Ascending aorta (tissue), 2 donors: ENCODE measurements at regions of chr2 and their contacts with region 1.

Region 1: GRCh38 chr2:47008381-47009252 is 93.0 kb upstream of the MCFD2 start:
- DNase-seq: peak in 1 of 2 donors; percentile 83
- H3K4me3 ChIP-seq: peak overlapping the region in 1 of 2 donors; percentile 11
- H3K27ac ChIP-seq: peak overlapping the region; percentile 71 to 77
- H3K4me1 ChIP-seq: peaks cover 20 to 49% of the 10 kb centered on the region in 2 donors
- H3K27me3 ChIP-seq: no peaks in the 10 kb centered on the region
- CTCF ChIP-seq: no peak

Region 2: DNA sequence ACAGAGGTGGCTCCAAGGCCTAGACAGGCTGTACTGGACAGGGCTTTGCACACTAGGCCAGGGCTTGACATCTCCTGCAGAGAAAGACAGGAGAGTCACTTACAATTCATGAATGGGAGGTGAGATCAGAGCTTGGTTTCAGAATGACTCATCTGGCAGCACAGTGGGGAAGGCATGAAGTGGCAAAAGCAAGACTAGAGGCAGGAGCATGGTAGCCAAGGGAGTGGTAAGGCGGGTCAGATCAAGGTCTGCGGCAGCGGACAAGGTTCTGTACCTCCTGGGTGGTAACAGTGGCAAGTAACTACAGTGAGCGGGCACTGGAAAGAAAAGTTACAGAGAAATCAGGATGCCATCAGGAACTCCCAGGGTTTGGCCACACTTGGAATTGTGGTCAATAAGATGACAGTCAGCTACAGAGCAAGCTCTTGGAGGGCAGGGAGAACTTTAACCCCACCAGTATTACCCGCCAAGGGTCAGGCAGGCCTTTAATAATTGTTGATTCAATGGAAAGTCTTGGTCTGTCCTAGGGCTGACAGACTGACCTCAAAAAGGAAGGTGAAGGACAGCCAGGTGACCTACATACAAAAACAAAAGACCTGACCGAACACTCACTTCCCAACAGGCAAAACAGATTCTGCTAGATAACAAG is 98.7 kb before region 1 on chr2:
- intact Hi-C with region 1: no loop called
- DNase-seq: no peak
- H3K4me3 ChIP-seq: no peak overlapping the region
- H3K27ac ChIP-seq: no peak overlapping the region
- H3K4me1 ChIP-seq: peaks cover 4 to 15% of the 10 kb centered on the region in 2 donors
- H3K27me3 ChIP-seq: no peaks in the 10 kb centered on the region
- CTCF ChIP-seq: no peak

Region 3: GRCh38 chr2:46984642-46985476 is 23.8 kb before region 1 on chr2:
- intact Hi-C with region 1: loop called (anchors 2 kb)
- DNase-seq: peak; percentile 82 to 94
- H3K4me3 ChIP-seq: no peak overlapping the region
- H3K27ac ChIP-seq: peak overlapping the region; percentile 90 to 93
- H3K4me1 ChIP-seq: peaks cover 28 to 63% of the 10 kb centered on the region in 2 donors
- H3K27me3 ChIP-seq: no peaks in the 10 kb centered on the region
- CTCF ChIP-seq: no peak

Region 4: DNA sequence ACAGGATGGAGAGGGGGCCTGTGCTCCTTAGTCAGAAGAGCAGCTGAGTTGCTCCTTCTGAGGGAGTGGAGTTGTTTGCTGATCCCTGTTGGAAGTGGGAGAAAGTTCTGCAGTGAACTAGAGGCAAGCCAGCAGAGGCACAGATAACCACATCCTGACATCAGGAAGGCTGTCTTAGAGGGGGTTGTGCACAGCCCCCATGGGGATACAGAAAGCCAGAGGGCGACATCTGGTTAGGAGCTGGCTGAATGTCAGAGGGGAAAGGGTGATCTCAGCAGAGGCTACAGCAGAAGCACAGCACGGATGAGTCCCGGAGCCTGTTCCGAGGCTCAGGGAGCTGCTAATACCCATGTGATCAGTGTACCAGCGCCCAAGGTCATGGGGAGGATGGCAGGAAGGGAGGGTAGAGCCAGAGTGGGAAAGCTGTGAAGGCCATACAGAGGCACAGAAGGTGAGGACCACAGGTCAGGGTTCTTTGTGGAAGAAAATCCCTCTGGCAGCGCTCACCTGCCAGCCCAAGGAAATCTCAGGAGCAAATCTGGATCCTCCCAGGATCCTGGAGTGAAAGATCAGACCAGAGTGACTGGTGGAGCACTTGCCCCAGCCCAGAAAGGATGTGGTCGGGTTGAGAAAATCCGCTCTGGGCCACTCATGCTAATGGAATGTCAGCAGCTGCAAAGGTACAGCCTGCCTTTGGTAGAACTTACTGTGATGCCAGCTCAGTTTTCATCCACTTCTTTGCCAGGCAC is 34.7 kb after region 1 on chr2:
- intact Hi-C with region 1: loop called (anchors 5 kb)
- DNase-seq: peak in 1 of 2 donors; percentile 89
- H3K4me3 ChIP-seq: peak overlapping the region in 1 of 2 donors; percentile 24
- H3K27ac ChIP-seq: peak overlapping the region; percentile 92 to 97
- H3K4me1 ChIP-seq: peaks cover 22 to 40% of the 10 kb centered on the region in 2 donors
- H3K27me3 ChIP-seq: no peaks in the 10 kb centered on the region
- CTCF ChIP-seq: peak in 1 of 3 experiments; percentile 10

Region 5: DNA sequence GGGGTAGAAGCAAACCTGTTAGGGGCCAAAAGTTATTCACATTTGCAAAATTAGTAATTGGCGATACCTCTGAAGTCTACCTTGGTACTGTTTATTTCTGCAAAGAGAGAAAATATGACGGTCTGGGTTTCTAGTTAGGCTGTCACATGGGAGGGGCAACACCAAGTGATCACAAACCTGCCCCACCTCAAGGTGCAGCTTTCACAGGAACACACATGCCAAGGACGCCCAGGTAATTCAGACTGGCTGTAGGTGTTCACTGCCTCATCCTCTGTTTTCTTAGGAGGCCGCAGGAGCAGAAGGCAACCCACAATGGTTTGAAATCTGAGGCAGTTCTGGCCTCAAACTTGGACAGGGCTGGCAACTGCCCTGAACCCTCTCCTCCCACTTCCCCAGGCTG is 90.3 kb after region 1 on chr2:
- intact Hi-C with region 1: no loop called
- DNase-seq: no peak
- H3K4me3 ChIP-seq: no peak overlapping the region
- H3K27ac ChIP-seq: no peak overlapping the region
- H3K4me1 ChIP-seq: no peaks in the 10 kb centered on the region
- H3K27me3 ChIP-seq: no peaks in the 10 kb centered on the region
- CTCF ChIP-seq: no peak